ENCODE measurements at regions of chr7 and their contacts with region 1.

Region 1: GRCh38 chr7:30564243-30564892 is 30.3 kb upstream of the GARS1 start:
- DNase-seq: peak; percentile 83
- ATAC-seq: peak; percentile 91 to 95

Region 2: GRCh38 chr7:30164567-30164966 is 399.8 kb before region 1 on chr7:
- intact Hi-C with region 1: loop called in 1 of 2 experiments (anchors 5 kb)
- DNase-seq: no peak
- ATAC-seq: peak; percentile 60 to 74

Region 3: GRCh38 chr7:30276203-30276900 is 288.0 kb before region 1 on chr7:
- intact Hi-C with region 1: loop called (anchors 2 to 10 kb)
- DNase-seq: no peak
- ATAC-seq: peak; percentile 61 to 70

Region 4: DNA sequence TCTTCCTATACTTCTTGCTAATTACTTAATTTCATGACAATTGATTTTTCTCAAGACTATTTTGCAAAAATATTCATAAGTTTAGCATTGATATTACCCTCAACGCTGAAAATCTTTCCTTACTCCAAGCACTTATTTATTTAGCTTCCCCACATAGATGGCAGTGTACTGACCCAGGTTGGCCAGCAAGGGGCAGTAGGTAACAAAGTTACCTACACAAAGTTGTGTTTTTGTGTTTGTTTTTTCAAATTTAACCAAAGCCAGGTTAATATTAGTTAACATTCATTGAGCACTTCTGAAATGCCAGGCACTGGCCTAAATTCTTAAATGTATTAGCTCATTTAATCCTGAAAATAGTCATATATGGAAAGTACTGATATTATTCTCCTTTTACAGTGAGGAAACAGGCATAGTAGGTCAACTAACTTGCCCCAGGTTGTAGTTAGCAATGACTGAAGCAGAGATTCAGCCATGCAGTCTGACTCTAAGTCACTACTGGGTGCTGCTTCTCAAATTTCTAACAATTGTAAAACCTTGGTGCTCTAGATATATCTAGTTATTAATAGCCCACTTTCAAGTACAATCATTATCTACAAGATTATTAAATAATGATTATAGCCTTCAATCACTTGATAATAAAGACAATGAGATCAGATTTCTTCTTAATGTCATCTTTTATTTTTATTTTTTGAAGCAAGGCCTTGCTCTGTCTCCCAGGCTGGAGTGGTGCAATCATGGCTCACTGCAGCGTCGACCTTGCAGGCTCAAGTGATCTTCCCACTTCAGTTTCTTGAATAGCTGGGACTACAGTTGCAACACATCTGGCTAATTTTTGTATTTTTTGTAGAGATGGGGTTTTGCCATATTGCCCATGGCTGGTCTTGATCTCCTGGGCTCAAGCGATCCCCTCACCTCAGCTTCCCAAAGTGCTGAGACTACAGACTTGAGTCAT is 54.0 kb before region 1 on chr7:
- intact Hi-C with region 1: loop called in 1 of 2 experiments (anchors 2 kb)
- DNase-seq: no peak
- ATAC-seq: peak in 1 of 2 donors; percentile 45